Ascending aorta (tissue), 2 donors: ENCODE measurements at regions of chr1 and their contacts with region 1.

Region 1: DNA sequence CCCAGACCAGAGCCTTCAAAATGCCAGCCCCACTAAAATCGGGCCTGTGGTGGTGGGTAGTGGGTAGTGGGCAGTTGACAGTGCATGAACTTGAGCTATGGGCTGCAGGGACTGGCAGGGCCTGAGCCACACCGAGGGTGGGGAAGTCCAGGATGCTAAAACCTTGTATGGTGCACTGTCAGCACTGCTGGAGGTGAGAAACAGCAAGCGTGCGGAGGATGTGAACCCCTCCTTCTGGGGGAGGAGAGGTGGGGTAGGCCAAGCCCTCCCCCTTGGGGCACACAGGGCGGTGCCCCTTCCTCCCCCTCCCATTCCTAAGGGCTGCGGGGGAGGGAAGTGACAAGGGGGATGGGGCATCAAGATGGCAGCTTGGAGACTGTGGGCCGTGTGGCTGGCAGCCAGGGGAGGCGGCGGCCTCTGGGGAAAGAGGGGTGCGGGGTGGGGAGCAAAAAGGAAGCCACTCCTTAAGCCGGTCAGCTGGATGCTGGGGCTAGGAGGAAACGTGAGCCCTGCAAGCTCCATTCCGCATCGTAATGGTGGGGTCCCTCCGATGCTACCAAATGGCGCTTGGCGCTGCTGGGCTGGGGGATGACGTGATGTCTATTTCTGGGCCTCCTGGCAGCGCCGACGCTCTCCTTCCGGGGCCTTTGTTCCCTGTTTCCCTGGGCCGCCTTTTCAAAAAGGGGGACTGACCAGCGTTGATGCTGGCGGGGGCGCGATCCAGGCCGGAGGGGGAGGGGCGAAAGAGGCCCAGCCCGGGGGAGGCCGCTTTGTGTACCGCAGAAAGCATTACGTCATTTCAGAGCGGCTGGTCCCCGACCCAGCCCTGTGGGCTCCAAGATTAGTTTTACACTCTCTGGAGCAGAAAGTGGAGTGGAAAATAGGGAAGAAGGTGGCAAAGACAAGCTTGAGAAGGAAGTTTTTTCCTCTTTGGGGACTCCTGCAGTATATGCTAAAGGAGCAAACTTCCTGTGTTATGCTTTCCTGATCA is 809 bp downstream of the SYT11 start:
- DNase-seq: peak; percentile 63 to 94
- H3K4me3 ChIP-seq: peak overlapping the region; percentile 58 to 68
- H3K27ac ChIP-seq: peak overlapping the region; percentile 96 to 98
- H3K4me1 ChIP-seq: peaks cover 8 to 26% of the 10 kb centered on the region in 2 donors
- H3K27me3 ChIP-seq: no peaks in the 10 kb centered on the region
- CTCF ChIP-seq: no peak

Region 2: GRCh38 chr1:155793213-155793612 is 67.0 kb before region 1 on chr1:
- intact Hi-C with region 1: no loop called
- DNase-seq: no peak
- H3K4me3 ChIP-seq: no peak overlapping the region
- H3K27ac ChIP-seq: no peak overlapping the region
- H3K4me1 ChIP-seq: no peaks in the 10 kb centered on the region
- H3K27me3 ChIP-seq: no peaks in the 10 kb centered on the region
- CTCF ChIP-seq: no peak

Region 3: DNA sequence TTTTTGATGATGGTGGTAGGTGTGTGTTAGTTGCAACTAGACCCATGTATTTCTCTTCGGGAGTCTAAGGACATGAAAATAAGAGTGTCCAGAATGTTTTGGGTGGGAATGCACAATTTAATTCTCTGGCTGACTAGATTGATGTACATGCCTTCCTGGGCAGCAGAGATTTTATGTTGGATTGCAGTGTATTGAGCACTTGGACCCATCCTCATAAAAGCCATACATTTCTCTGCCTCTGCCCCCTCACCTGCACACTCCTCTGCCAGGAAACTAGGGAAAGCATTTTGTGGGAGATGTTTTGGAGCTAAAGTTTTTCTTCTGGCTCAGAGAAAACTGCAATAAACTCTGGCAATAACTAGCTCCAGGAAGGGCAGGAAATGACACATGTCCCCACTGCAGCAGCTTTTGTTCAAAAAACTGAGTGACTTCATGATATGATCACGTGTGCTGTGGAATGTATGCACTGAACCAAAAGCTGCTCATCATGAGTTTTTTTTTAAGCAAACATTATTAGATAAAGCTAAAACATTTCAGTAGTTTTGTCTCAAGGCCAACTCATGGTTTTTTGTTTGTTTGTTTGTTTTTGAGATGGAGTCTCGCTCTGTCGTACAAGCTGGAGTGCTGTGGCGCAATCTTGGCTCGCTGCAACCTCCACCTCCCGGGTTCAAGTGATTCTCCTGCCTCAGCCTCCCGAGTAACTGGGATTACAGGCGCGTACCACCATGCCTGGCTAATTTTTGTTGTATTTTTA is 33.4 kb after region 1 on chr1:
- intact Hi-C with region 1: loop called (anchors 1 kb)
- DNase-seq: peak in 1 of 2 donors; percentile 71
- H3K4me3 ChIP-seq: peak overlapping the region in 1 of 2 donors; percentile 19
- H3K27ac ChIP-seq: peak overlapping the region; percentile 88 to 92
- H3K4me1 ChIP-seq: peaks cover 0 to 18% of the 10 kb centered on the region in 2 donors
- H3K27me3 ChIP-seq: no peaks in the 10 kb centered on the region
- CTCF ChIP-seq: no peak

Region 4: DNA sequence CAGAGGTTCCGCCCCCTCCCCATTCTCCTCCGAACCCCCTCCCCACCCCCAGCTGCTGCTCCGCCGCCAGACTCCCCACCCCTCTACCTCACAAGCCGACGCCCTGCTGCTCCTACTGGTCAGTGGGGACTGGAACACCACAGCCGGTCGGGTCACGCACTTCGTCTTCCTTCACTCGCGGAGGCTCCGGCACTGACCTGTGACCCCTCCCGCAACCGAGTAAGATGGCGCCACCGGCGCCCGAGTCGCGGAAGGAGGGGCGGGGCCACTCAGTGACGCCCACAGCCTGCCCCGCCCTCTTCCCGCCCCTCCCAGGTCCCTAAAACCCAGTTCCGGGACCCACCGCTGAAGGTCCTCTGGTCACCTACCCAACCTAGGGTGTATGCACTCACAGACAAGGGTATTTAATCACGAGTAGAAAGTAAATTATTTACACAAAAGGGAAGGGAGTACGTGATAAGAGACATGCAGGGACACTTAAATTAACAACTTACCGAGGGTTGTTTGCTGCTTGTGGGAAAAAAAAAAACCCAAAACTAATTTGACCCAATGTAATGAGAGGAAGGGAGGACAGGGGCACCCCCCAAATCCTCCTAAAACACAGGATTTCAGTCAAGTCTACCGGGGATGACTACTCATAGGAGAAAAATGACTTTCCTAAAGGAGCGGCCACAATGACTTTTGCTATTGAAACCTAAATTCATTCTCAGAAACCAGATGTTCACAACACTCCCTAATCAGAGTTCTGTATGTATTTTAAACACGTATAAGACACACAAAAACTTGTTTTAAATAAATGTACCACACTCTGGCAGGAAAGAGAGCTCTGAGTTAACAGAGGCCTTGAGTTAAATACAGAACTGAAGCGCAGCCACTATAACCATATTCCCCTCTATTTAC is 51.2 kb after region 1 on chr1 and contains the start of gene RIT1:
- intact Hi-C with region 1: loop called (anchors 1 kb)
- DNase-seq: peak; percentile 59 to 94
- H3K4me3 ChIP-seq: peak within 1 kb of the TSS; percentile 78 to 84
- H3K27ac ChIP-seq: peak within 1 kb of the TSS; percentile 90 to 95
- H3K4me1 ChIP-seq: peaks cover 3 to 15% of the 10 kb centered on the region in 2 donors
- H3K27me3 ChIP-seq: no peaks in the 10 kb centered on the region
- CTCF ChIP-seq: peak in 1 of 3 experiments; percentile 16
- total RNA-seq, gene RIT1: 17.1 TPM

Region 5: DNA sequence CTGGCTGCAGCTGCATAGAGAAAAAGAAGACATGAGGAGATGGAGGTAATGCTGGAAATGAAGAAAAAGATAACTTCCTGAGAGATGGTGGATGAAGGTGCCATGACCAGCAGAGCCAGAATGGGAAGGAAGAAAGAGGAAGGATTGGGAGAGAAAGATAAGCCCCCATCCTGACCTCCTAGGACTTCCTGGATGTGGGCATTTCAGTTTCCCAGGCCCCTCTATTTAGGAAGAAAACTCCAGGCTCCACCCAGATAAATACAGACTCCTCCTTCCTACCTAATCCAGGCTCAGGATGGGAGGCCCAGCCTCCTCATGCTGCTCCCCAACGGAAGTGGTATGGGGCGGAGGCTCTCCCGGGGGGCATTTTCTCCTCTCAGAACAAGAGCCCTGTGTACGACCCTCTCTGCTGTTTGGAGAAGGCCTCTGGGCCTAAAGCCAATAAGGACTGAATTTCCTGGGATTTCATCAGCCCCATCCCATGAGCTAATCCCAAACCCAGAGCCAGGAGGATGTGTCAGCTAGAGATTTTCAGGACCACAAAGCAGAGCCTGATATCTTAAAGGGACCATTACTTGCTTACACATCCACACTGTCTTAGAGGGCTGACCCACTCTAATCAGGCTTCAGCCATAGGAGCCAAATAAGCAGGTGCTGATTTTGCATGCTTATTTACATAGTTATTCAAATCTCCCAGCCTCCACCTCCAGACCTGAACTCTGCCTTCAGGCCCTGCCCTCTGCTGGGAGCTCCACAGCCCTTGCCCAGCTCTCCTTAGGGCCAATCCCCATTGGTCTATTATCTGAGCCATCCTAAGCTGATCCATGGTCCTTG is 123.2 kb after region 1 on chr1:
- intact Hi-C with region 1: loop called (anchors 5 kb)
- DNase-seq: peak in 1 of 2 donors; percentile 83
- H3K4me3 ChIP-seq: peak overlapping the region in 1 of 2 donors; percentile 9
- H3K27ac ChIP-seq: peak overlapping the region; percentile 94 to 98
- H3K4me1 ChIP-seq: peaks cover 30 to 44% of the 10 kb centered on the region in 2 donors
- H3K27me3 ChIP-seq: no peaks in the 10 kb centered on the region
- CTCF ChIP-seq: peak in 1 of 3 experiments; percentile 27

Region 6: GRCh38 chr1:156012051-156012817 is 152.1 kb after region 1 on chr1:
- intact Hi-C with region 1: no loop called
- DNase-seq: no peak
- H3K4me3 ChIP-seq: no peak overlapping the region
- H3K27ac ChIP-seq: no peak overlapping the region
- H3K4me1 ChIP-seq: no peaks in the 10 kb centered on the region
- H3K27me3 ChIP-seq: no peaks in the 10 kb centered on the region
- CTCF ChIP-seq: no peak